PC-3 (cell line): ENCODE measurements at regions of chr15 and their contacts with region 1.

Region 1: DNA sequence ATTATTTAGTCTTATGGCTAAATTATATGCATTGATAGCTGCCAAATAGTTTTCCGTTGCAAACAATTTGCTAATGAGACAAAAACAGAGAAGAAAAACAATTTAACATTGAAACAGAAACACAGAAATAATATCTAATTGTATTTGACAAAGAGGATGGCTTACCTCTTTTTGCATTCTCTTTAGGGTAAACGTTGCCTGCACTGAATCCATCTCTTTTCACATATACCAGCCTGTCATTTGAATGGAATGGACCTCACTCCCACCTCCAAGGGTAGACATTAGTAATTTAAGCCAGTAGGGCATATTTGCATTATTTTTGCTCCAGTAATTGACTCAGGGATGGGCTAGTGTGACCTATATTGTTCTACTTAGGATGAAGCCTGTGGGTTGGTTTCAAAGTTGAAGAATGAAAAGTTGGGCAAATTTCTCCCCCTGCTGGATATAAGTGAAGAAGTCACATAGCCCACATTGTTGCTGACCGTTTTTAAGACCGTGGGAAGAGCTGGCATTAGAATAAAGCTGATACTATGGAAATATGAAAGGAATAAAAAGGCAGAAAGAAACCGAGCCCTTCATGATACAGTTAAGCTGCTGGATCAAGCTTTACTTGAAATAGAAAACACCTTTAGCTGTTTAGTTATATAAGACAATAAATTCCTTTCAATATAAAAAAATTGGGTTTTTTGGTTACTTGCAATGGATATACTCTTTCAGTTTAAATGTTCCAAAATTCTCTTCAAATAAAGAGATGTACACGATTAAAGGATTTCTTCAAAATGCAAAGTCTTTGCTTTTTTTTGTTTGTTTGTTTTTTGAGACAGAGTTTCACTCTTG is 26.9 kb downstream of the PIERCE2 start:
- DNase-seq: peak; percentile 68
- ATAC-seq: peak; percentile 89
- H3K4me3 ChIP-seq: no peak overlapping the region
- H3K27ac ChIP-seq: no peak overlapping the region
- H3K4me1 ChIP-seq: peaks cover 6% of the 10 kb centered on the region; the same call in 1 of the 2 replicates
- H3K27me3 ChIP-seq: no peaks in the 10 kb centered on the region
- CTCF ChIP-seq: peak; percentile 69

Region 2: DNA sequence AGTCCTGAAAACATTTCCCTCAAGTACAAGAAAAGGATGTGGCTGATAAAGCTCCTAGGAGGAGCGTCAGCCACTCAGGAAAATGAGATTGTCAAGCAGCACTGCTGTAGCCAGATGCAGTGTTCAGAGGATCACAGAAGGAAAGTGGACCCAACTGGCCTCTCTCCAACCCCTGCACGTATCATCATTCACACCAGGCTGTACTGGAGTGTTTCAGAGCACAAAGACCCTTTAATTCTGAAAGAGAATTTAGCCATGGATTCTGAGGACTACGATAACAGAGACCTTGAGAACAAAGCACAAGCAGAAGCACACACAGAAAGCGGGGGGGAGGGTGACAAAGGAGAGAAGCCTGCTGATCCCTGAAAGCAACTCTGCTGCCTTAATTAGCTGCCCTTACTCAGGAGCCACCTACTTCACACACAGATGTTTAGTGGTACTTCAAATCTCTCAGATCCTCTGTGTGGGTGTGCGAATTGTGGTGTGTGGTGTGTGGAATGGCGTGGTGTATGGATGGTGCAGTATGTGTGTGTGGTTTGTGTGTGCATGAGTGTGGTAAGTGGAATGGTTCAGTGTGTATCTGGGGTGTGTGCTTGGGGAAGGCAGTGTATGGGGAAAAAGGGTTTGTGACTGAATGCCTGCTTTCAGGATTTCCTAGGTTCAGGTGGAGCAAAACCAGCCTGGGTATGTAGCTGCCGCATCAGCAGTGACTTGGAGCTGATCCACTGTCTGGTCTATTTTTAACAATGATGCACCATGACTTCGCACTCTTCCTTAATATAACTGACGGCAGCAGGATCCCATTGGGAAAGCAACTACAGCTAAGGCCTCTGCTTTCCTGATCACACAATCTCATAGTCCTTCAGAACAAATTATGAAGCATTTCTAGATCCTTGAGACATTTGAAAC is 431.0 kb before region 1 on chr15:
- CTCF ChIA-PET with region 1: no interaction called
- POLR2A ChIA-PET with region 1: no interaction called
- intact Hi-C with region 1: no loop called
- DNase-seq: no peak
- ATAC-seq: no peak
- H3K4me3 ChIP-seq: no peak overlapping the region
- H3K27ac ChIP-seq: no peak overlapping the region
- H3K4me1 ChIP-seq: no peaks in the 10 kb centered on the region
- H3K27me3 ChIP-seq: peaks cover 3% of the 10 kb centered on the region; the same call in 1 of the 2 replicates
- CTCF ChIP-seq: no peak

Region 3: GRCh38 chr15:55221090-55222011 is 213.9 kb before region 1 on chr15:
- CTCF ChIA-PET with region 1: interaction called, 7 read pairs
- POLR2A ChIA-PET with region 1: no interaction called
- intact Hi-C with region 1: loop called (anchors 1 kb)
- DNase-seq: peak; percentile 48
- ATAC-seq: no peak
- H3K4me3 ChIP-seq: no peak overlapping the region
- H3K27ac ChIP-seq: no peak overlapping the region
- H3K4me1 ChIP-seq: peaks cover 8% of the 10 kb centered on the region; the same call in 1 of the 2 replicates
- H3K27me3 ChIP-seq: no peaks in the 10 kb centered on the region
- CTCF ChIP-seq: no peak

Region 4: GRCh38 chr15:55290528-55291057 is 144.6 kb before region 1 on chr15:
- CTCF ChIA-PET with region 1: no interaction called
- POLR2A ChIA-PET with region 1: no interaction called
- intact Hi-C with region 1: loop called (anchors 2 kb)
- DNase-seq: peak; percentile 73
- ATAC-seq: peak; percentile 87
- H3K4me3 ChIP-seq: peak overlapping the region; percentile 98
- H3K27ac ChIP-seq: peak overlapping the region; percentile 45
- H3K4me1 ChIP-seq: peaks cover 10% of the 10 kb centered on the region; the same call in 1 of the 2 replicates
- H3K27me3 ChIP-seq: no peaks in the 10 kb centered on the region
- CTCF ChIP-seq: peak; percentile 88

Region 5: GRCh38 chr15:55318588-55319494 is 116.4 kb before region 1 on chr15 and contains the starts of genes PIGB and PIGBOS1:
- CTCF ChIA-PET with region 1: no interaction called
- POLR2A ChIA-PET with region 1: no interaction called
- intact Hi-C with region 1: loop called (anchors 2 kb)
- DNase-seq: peak; percentile 76
- ATAC-seq: peak; percentile 90
- H3K4me3 ChIP-seq: peak within 1 kb of the TSS; percentile 93
- H3K27ac ChIP-seq: peak within 1 kb of the TSS; percentile 82
- H3K4me1 ChIP-seq: peaks cover 4% of the 10 kb centered on the region
- H3K27me3 ChIP-seq: no peaks in the 10 kb centered on the region
- CTCF ChIP-seq: no peak
- total RNA-seq, gene PIGB: 10.9 and 15.3 TPM in 2 replicates
- total RNA-seq, gene PIGBOS1: 8.4 and 8.6 TPM in 2 replicates

Region 6: DNA sequence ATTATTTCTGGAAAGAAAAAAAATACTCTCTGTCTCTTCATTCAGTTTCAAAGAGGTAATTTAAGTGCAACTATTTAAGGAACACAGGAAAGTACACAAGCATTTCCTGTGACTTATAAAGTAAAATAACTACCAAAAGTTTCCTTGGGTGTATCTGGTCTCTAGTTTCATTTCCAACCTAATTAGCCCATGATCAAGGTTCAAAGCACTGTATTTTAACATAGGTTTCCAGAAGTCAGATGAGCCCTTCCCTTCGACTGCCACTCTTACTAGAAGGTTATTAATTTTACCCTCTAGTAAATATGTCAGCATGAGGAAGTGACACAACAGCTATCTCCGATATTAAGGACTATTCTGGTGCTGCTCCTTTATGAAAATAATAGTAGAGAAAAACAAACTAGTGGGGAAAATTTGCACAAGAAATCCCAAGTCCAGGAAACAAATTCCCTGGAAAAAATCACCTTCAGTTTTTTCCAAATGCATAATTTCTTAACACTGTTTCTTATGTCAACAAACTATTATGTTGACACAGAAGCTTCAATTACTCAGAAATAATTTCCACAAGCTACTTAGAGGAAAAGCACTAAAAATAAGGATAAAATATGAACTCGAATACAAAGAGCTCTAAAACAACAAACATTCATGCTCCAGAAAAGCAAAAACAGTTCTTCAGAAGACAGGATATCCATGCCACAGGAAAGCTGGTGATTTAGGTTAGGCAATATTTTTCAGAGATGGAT is 62.3 kb before region 1 on chr15:
- CTCF ChIA-PET with region 1: no interaction called
- POLR2A ChIA-PET with region 1: no interaction called
- intact Hi-C with region 1: loop called (anchors 5 kb)
- DNase-seq: no peak
- ATAC-seq: peak; percentile 40; the same call in 1 of the 2 replicates
- H3K4me3 ChIP-seq: no peak overlapping the region
- H3K27ac ChIP-seq: no peak overlapping the region
- H3K4me1 ChIP-seq: peaks cover 7% of the 10 kb centered on the region; the same call in 1 of the 2 replicates
- H3K27me3 ChIP-seq: no peaks in the 10 kb centered on the region
- CTCF ChIP-seq: no peak

Region 7: GRCh38 chr15:55407949-55408791 is 27.0 kb before region 1 on chr15 and contains the starts of genes CCPG1 and PIERCE2:
- CTCF ChIA-PET with region 1: interaction called, 18 read pairs
- POLR2A ChIA-PET with region 1: interaction called, 3 read pairs
- intact Hi-C with region 1: loop called (anchors 1 kb)
- DNase-seq: peak; percentile 90
- ATAC-seq: peak; percentile 91
- H3K4me3 ChIP-seq: peak within 1 kb of the TSS; percentile 79
- H3K27ac ChIP-seq: peak within 1 kb of the TSS; percentile 46
- H3K4me1 ChIP-seq: peaks cover 4% of the 10 kb centered on the region; the same call in 1 of the 2 replicates
- H3K27me3 ChIP-seq: no peaks in the 10 kb centered on the region
- CTCF ChIP-seq: peak; percentile 47
- total RNA-seq, gene CCPG1: 7.5 and 7.8 TPM in 2 replicates
- total RNA-seq, gene PIERCE2: 0.63 and 3.1 TPM in 2 replicates